HAP-1 (cell line): ENCODE measurements at regions of chr12 and their contacts with region 1.

Region 1: GRCh38 chr12:50504798-50505385 is at the start of gene DIP2B:
- DNase-seq: peak; percentile 81 to 98
- H3K4me3 ChIP-seq: peak within 1 kb of the TSS; percentile 70
- H3K4me1 ChIP-seq: peaks cover 22% of the 10 kb centered on the region
- H3K27me3 ChIP-seq: no peaks in the 10 kb centered on the region

Region 2: GRCh38 chr12:50419511-50419909 is 85.4 kb before region 1 on chr12:
- in situ Hi-C with region 1: no loop called
- DNase-seq: no peak
- H3K4me3 ChIP-seq: no peak overlapping the region
- H3K4me1 ChIP-seq: no peaks in the 10 kb centered on the region
- H3K27me3 ChIP-seq: no peaks in the 10 kb centered on the region

Region 3: GRCh38 chr12:50620109-50620977 is 115.5 kb after region 1 on chr12:
- in situ Hi-C with region 1: loop called (anchors 10 kb)
- DNase-seq: peak; percentile 76 to 90
- H3K4me3 ChIP-seq: no peak overlapping the region
- H3K4me1 ChIP-seq: peaks cover 34% of the 10 kb centered on the region
- H3K27me3 ChIP-seq: no peaks in the 10 kb centered on the region

Region 4: GRCh38 chr12:50734409-50735263 is 229.7 kb after region 1 on chr12:
- in situ Hi-C with region 1: loop called (anchors 25 kb)
- DNase-seq: peak; percentile 58 to 63
- H3K4me3 ChIP-seq: no peak overlapping the region
- H3K4me1 ChIP-seq: no peaks in the 10 kb centered on the region
- H3K27me3 ChIP-seq: no peaks in the 10 kb centered on the region

Region 5: GRCh38 chr12:50842637-50843493 is 338.0 kb after region 1 on chr12 and contains the start of gene TMPRSS12:
- in situ Hi-C with region 1: no loop called
- DNase-seq: no peak
- H3K4me3 ChIP-seq: no peak within 1 kb of the TSS
- H3K4me1 ChIP-seq: no peaks in the 10 kb centered on the region
- H3K27me3 ChIP-seq: no peaks in the 10 kb centered on the region